ENCODE measurements at regions of chr10 and their contacts with region 1.

Region 1: DNA sequence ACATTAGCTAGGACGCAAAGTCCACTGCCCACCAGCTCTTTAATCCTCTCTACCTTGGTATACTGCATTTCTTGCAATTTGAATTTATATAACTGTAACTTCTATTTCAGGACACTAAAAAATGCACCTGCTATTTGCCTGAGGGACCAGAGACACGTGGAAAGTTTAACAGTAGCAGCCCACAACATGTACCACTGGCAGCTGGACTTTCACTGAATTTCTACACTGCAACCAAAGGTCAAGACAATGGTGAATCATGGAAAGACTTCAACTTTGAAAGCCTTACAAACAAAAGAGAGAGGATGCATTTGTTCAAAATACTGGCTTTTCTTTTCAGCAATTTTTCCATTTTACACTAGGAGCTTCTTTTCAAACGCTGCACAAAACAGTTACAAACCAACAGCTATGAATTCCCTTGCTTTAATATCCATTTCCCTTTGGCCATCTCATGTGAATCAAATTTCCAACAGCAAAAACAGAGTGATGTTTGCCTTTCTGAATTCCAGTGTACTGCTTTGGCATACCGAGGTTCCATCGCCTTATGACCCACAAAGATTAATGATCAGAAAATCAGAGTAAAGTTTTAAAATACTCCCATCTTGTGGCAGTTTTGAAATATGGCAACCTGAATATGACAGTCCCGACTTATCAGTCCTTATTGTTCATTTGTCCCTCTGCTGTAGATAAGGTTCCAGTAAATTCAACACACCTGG is 29.9 kb upstream of the HNRNPH3 start:
- DNase-seq: peak; percentile 24
- H3K4me3 ChIP-seq: no peak overlapping the region
- H3K27me3 ChIP-seq: no peaks in the 10 kb centered on the region
- CTCF ChIP-seq: peak; percentile 50

Region 2: DNA sequence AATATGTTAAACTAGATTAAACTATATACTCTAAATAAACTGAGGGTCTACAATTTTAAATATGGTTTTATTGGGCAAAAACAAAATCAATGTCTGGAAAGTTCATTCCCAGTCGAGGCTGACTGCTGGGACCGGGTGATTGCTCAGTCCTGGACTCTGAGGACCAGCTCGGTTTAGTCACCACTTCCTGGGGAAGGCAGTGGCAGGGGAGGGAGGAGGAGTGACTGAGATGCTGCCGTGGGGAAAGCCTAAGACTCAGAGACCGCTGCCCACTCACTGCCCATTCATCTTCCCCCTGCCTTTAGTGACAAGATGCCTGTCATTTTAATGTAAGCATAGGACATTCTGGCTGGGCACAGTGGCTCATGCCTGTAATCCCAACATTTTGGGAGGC is 99.0 kb before region 1 on chr10:
- CTCF ChIA-PET with region 1: interaction called, 10 read pairs
- POLR2A ChIA-PET with region 1: no interaction called
- DNase-seq: no peak
- H3K4me3 ChIP-seq: no peak overlapping the region
- H3K27me3 ChIP-seq: no peaks in the 10 kb centered on the region
- CTCF ChIP-seq: no peak

Region 3: GRCh38 chr10:68318331-68319059 is 16.5 kb after region 1 on chr10:
- CTCF ChIA-PET with region 1: interaction called, 25 read pairs
- POLR2A ChIA-PET with region 1: no interaction called
- DNase-seq: no peak
- H3K4me3 ChIP-seq: no peak overlapping the region
- H3K27me3 ChIP-seq: no peaks in the 10 kb centered on the region
- CTCF ChIP-seq: no peak

Region 4: GRCh38 chr10:68560186-68560942 is 258.4 kb after region 1 on chr10 and contains the start of gene TET1:
- CTCF ChIA-PET with region 1: no interaction called
- POLR2A ChIA-PET with region 1: no interaction called
- DNase-seq: no peak
- H3K4me3 ChIP-seq: peak within 1 kb of the TSS; percentile 77
- H3K27me3 ChIP-seq: no peaks in the 10 kb centered on the region
- CTCF ChIP-seq: no peak
- polyA plus RNA-seq, gene TET1: 1.1 and 1.9 TPM in 2 replicates

Measured in BJ (cell line).